ENCODE measurements at regions of chr4 and their contacts with region 1.

Region 1: DNA sequence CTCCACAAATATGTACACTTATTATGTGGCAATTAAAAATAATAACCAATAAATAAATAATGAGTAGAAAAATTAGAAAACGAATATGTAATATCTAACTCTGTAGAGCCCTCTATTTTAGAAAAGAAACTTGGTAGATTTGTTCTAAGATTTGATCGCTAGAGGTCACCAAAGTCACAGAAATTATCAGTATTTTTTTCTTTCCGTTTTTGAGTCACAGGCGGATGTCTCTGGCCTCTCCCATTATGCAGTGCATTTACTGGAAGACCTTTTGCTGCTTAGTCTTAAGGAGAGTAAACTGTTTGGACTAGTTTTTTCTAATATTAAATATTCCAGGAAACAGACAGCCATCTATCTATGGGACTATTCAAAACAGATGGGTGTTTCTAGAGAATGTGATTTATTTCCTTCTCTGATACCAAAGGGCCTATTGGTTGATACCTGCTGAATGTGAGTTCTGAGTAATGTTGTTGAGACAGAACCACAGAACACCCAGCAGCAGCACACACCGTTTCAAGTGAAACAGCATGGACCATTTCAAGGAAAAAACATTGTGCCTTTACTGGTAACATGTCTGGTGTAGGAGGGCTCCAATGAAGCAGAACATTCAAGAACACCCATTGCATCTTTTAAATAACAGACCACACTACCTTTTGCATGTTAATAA is 34.0 kb upstream of the GYPA start:
- DNase-seq: peak; percentile 16
- ATAC-seq: peak; percentile 86
- H3K4me3 ChIP-seq: no peak overlapping the region
- H3K27ac ChIP-seq: no peak overlapping the region
- H3K4me1 ChIP-seq: no peaks in the 10 kb centered on the region
- H3K27me3 ChIP-seq: no peaks in the 10 kb centered on the region; a peak in 1 of 4 replicates
- CTCF ChIP-seq: peak; percentile 32 to 63 (median 40); a peak in 5 of 6 replicates
- EP300 ChIP-seq: no peak
- POLR2A ChIP-seq: no peak
- RAD21 ChIP-seq: peak; percentile 83

Region 2: DNA sequence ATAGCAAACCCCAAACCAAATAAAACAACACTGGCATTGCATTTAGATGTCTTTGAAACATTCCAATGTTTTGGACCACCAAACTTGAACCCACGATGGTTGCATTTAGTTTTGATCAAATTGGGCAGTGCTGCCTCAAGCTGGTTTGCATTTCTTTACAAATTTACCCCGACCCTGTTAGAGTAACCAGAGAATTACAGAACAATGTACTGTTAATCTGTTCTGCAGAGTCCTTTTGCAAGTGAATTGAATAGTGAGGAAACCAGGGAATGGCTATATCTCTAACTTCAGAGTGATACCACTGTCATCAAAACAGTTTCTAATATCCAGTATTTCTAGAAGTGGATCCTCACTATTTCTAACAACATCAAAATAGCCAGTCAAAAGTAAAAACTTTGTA is 15.5 kb after region 1 on chr4:
- CTCF ChIA-PET with region 1: no interaction called
- POLR2A ChIA-PET with region 1: no interaction called
- RAD21 ChIA-PET with region 1: no interaction called
- SMC1A ChIA-PET with region 1: no interaction called
- in situ Hi-C with region 1: no loop called
- intact Hi-C with region 1: no loop called
- DNase-seq: no peak
- ATAC-seq: no peak
- H3K4me3 ChIP-seq: no peak overlapping the region
- H3K27ac ChIP-seq: no peak overlapping the region
- H3K4me1 ChIP-seq: no peaks in the 10 kb centered on the region
- H3K27me3 ChIP-seq: no peaks in the 10 kb centered on the region
- CTCF ChIP-seq: no peak
- EP300 ChIP-seq: no peak
- POLR2A ChIP-seq: no peak
- RAD21 ChIP-seq: no peak

Region 3: DNA sequence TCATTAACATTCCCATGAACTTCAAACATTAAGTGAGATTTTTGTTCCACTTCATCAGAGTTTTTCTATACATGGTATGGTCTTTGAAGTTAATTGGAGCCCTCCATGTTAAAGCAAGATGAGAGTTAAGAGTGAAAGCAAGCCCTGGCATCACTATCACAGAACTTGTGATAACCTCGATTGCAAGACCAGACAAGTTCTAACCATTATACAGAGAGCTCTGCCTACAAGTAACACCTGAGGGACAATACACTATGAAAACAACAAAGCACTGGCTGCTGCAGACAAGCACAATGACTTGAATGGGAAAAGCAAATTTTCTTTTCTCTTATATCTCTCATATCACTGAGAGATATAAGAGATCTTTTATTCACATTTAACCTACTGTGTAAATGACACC is 92.5 kb after region 1 on chr4:
- CTCF ChIA-PET with region 1: no interaction called
- POLR2A ChIA-PET with region 1: no interaction called
- RAD21 ChIA-PET with region 1: no interaction called
- SMC1A ChIA-PET with region 1: no interaction called
- in situ Hi-C with region 1: no loop called
- intact Hi-C with region 1: no loop called
- DNase-seq: no peak
- ATAC-seq: no peak
- H3K4me3 ChIP-seq: no peak overlapping the region
- H3K27ac ChIP-seq: no peak overlapping the region
- H3K4me1 ChIP-seq: no peaks in the 10 kb centered on the region
- H3K27me3 ChIP-seq: no peaks in the 10 kb centered on the region
- CTCF ChIP-seq: no peak
- EP300 ChIP-seq: no peak
- POLR2A ChIP-seq: no peak
- RAD21 ChIP-seq: no peak

Region 4: DNA sequence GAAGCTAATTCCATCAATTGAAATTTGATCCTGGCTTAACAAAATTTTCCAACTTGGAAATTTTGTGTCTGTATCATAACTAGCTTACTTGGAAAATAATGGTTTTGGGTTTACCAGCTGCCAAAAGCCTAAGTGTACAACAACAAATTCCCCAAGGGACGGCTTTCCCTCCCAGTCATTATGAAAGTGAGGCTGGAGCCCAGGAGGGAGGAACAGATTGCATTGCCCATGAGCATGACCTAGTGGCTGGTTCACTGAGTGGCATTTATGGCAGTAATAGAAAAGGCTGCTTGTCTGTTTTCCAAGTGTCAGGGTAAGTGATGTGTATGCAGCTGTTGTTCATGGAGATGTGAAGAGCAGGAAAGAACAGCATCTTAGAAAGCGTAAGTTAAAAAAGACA is 400.6 kb after region 1 on chr4:
- CTCF ChIA-PET with region 1: interaction called, 6 read pairs
- POLR2A ChIA-PET with region 1: no interaction called
- RAD21 ChIA-PET with region 1: no interaction called
- SMC1A ChIA-PET with region 1: no interaction called
- in situ Hi-C with region 1: no loop called
- intact Hi-C with region 1: loop called (anchors 2 kb)
- DNase-seq: no peak
- ATAC-seq: peak; percentile 61
- H3K4me3 ChIP-seq: no peak overlapping the region
- H3K27ac ChIP-seq: no peak overlapping the region
- H3K4me1 ChIP-seq: no peaks in the 10 kb centered on the region
- H3K27me3 ChIP-seq: no peaks in the 10 kb centered on the region
- CTCF ChIP-seq: peak; percentile 23 to 34 (median 24); a peak in 2 of 6 replicates
- EP300 ChIP-seq: no peak
- POLR2A ChIP-seq: no peak
- RAD21 ChIP-seq: peak; percentile 53

Region 5: GRCh38 chr4:144754562-144755410 is 580.3 kb after region 1 on chr4:
- CTCF ChIA-PET with region 1: interaction called, 3 read pairs
- POLR2A ChIA-PET with region 1: no interaction called
- RAD21 ChIA-PET with region 1: no interaction called
- SMC1A ChIA-PET with region 1: interaction called, 10 read pairs
- in situ Hi-C with region 1: no loop called
- intact Hi-C with region 1: loop called (anchors 10 kb)
- DNase-seq: no peak
- ATAC-seq: peak; percentile 45; the same call in 1 of the 3 replicates
- H3K4me3 ChIP-seq: no peak overlapping the region
- H3K27ac ChIP-seq: no peak overlapping the region
- H3K4me1 ChIP-seq: no peaks in the 10 kb centered on the region
- H3K27me3 ChIP-seq: no peaks in the 10 kb centered on the region
- CTCF ChIP-seq: peak in 1 of 3 experiments; percentile 25; a peak in 3 of 6 replicates
- EP300 ChIP-seq: no peak
- POLR2A ChIP-seq: no peak
- RAD21 ChIP-seq: peak; percentile 53

Region 6: DNA sequence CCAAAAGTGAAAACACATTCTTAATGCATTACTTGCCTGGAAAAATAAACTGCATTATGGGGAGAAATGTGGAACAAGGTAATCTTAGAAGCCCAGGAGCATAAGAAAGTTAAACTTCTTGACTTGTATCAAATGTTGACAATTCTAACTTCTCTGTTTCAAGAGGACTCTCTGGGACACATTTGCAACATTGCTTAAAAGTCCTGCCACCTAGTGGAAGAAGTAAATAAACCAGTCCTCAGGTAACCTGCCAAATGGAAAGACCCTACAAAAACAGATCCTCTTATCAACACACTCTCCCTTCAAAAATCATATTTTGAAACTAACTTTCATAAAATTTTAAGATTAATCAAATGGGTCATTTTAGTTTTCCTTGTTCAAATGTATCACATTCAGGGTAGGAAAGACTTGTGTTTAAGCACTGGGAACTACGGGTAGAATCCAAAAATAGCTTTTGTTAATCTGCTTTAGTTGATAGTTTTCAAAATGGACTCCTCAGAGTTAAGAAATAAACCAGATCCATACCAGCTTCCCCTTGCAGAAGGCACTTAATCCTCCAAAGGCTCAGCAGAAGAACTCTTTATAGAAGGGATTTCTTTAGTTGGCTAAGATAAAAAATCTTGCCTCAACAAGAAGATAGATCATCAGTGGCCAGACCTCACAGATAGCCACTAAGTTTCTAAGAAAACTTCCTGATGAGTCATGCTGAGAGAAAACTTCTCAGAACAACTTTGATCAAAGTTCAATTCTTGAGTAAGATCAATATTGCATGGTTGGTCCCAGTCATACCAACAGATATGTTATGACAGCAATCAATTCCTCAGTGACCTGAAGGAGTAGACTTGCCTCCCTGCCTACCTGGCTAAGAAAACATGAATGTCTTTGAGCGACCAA is 613.1 kb after region 1 on chr4:
- CTCF ChIA-PET with region 1: interaction called, 3 read pairs
- POLR2A ChIA-PET with region 1: no interaction called
- RAD21 ChIA-PET with region 1: no interaction called
- SMC1A ChIA-PET with region 1: no interaction called
- in situ Hi-C with region 1: loop called (anchors 10 kb)
- intact Hi-C with region 1: loop called (anchors 1 kb)
- DNase-seq: no peak
- ATAC-seq: peak; percentile 89
- H3K4me3 ChIP-seq: no peak overlapping the region
- H3K27ac ChIP-seq: no peak overlapping the region
- H3K4me1 ChIP-seq: no peaks in the 10 kb centered on the region
- H3K27me3 ChIP-seq: no peaks in the 10 kb centered on the region
- CTCF ChIP-seq: peak; percentile 42 to 57 (median 49); a peak in 5 of 6 replicates
- EP300 ChIP-seq: 0 out of 4 replicates have a peak, but pooled peaks of 1 of the 2 experiments have one; percentile 40
- POLR2A ChIP-seq: no peak
- RAD21 ChIP-seq: peak; percentile 66

Region 7: DNA sequence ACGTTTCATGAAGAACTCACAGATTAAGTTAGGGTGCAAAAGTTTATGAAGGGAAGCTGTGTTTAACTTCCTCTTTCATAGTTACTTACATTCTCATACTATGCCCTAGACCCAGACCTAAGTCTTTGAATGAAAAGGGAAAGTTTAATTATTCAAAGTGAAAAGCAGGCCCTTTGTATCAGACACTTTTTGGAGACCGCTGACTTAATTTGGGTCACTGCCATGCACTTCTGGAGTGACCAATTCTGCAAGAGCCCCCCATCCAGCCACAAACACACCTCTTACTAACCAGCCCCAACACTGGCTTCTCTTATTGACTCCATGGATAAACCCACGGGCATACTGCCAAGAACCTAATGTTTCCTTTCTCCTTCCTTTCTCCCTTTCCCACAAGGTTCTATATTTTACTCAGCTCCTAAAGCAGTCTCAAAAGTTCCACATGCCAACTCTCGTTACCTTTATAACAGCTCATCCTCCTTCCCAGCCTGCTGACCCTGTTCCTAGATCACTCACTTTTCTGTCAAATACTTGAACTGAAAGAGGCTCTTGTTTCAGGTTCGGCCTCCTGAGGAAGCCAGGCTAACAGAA is 958.1 kb after region 1 on chr4:
- CTCF ChIA-PET with region 1: no interaction called
- POLR2A ChIA-PET with region 1: no interaction called
- RAD21 ChIA-PET with region 1: no interaction called
- SMC1A ChIA-PET with region 1: no interaction called
- in situ Hi-C with region 1: no loop called
- intact Hi-C with region 1: loop called (anchors 10 kb)
- DNase-seq: peak; percentile 53
- ATAC-seq: peak; percentile 91
- H3K4me3 ChIP-seq: peak overlapping the region; percentile 16; the same call in 1 of the 2 replicates
- H3K27ac ChIP-seq: peak overlapping the region; percentile 76
- H3K4me1 ChIP-seq: peaks cover 28% of the 10 kb centered on the region
- H3K27me3 ChIP-seq: no peaks in the 10 kb centered on the region
- CTCF ChIP-seq: no peak
- EP300 ChIP-seq: peak; percentile 11 to 25; a peak in 1 of 4 replicates
- POLR2A ChIP-seq: no peak
- RAD21 ChIP-seq: no peak

Region 8: DNA sequence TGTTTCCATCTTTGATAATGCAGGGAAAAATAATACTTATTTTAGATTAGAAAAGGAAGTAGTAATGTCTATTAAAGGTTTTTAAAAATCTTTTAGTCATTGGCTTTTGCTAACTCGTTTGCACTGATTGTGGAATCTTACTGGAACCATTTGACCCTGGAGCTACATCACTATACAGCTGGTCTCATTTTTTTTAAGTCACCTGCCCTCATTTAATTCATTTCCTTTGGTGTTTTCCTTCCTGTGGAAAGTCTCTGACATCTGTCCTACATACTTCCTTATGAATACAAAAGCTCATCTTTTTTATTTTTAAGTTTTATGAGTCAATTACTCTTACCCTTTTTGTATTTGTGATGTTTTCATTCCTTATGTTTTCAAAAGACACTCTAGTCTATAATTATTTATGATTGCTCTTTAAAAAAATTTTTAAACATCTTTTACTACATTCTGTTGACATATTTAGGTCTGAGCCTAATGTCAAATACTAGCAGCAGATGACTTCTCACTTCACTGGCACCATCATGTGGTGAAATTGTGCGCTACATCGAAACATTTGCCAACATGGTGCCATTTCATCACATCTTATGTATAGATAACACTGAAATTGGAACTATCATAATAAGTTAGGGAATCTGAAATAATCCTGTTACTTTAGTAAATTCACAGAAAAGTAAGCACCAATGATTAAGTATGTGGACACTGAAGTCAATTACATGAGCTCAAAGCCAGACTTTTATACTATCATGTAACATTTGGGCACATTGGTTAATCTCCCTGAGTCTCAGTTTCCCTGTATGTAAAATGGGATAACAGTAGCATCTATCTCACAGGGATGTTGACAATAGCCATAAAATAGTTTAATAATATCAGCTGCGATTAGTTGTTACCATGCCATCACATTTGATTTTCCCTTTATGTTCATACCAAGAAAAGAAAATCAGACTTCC is 1435.2 kb after region 1 on chr4:
- CTCF ChIA-PET with region 1: no interaction called
- POLR2A ChIA-PET with region 1: no interaction called
- RAD21 ChIA-PET with region 1: no interaction called
- SMC1A ChIA-PET with region 1: no interaction called
- in situ Hi-C with region 1: loop called (anchors 25 kb)
- intact Hi-C with region 1: loop called (anchors 1 kb)
- DNase-seq: peak; percentile 58
- ATAC-seq: peak; percentile 90
- H3K4me3 ChIP-seq: no peak overlapping the region
- H3K27ac ChIP-seq: no peak overlapping the region
- H3K4me1 ChIP-seq: no peaks in the 10 kb centered on the region
- H3K27me3 ChIP-seq: no peaks in the 10 kb centered on the region
- CTCF ChIP-seq: peak; percentile 72 to 83 (median 82)
- EP300 ChIP-seq: no peak
- POLR2A ChIP-seq: no peak
- RAD21 ChIP-seq: peak; percentile 97

Measured in GM12878 (cell line).